IMR-90 (cell line): ENCODE measurements at regions of chr2 and their contacts with region 1.

Region 1: GRCh38 chr2:54704688-54705605 is 18.5 kb upstream of the EML6 start:
- DNase-seq: peak; percentile 77
- ATAC-seq: peak; percentile 87
- H3K4me3 ChIP-seq: no peak overlapping the region
- H3K27ac ChIP-seq: no peak overlapping the region
- H3K4me1 ChIP-seq: no peaks in the 10 kb centered on the region; the same call in 1 of the 2 replicates
- H3K27me3 ChIP-seq: peaks cover 15% of the 10 kb centered on the region
- CTCF ChIP-seq: peak; percentile 81
- POLR2A ChIP-seq: no peak
- RAD21 ChIP-seq: peak; percentile 85

Region 2: DNA sequence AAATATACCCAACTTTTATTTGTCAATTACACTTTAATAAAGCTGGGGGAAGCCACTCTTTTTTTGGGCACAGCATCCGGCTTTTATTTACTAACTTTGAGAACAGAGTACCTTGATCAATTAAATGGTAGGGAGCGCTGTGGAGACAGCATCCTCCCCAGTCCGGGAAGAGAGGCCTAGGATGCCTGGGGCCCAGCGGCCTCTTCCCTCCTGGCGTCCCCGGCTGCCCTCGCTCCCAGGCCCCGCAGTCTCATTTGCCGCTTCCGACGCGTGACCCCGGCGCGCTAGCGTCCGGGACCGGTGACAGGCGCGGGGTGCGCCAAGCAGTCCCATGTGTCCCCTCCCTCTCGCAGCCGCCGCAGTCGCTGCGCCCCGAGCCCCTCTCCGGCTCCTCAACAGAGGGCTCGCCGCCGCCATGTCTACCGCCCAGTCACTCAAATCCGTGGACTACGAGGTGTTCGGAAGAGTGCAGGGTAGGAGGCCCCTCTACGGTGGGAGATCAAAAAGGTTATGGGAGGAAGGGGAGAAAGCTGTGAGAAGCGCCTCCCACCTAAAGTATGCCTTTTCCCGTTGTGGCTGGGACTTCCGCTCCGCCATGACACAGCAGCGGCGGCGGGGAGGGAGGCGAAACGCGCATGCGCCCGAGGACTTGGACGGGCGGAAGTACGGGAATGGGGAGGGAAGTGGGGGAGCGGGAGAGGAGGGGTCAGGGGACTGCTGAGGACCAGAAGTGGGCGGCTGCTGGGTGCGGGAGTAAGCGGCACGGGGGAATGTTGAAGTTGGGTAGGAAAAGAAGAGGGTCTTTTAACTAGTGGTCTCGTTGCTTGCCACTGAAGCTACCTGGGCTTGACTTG is 589.4 kb before region 1 on chr2 and contains the start of gene ACYP2:
- CTCF ChIA-PET with region 1: no interaction called
- POLR2A ChIA-PET with region 1: no interaction called
- dilution Hi-C with region 1: no loop called
- in situ Hi-C with region 1: loop called (anchors 10 kb)
- intact Hi-C with region 1: loop called (anchors 2 kb)
- DNase-seq: peak; percentile 96
- ATAC-seq: peak; percentile 97
- H3K4me3 ChIP-seq: peak within 1 kb of the TSS; percentile 77
- H3K27ac ChIP-seq: peak within 1 kb of the TSS; percentile 99
- H3K4me1 ChIP-seq: no peaks in the 10 kb centered on the region
- H3K27me3 ChIP-seq: no peaks in the 10 kb centered on the region
- CTCF ChIP-seq: peak; percentile 47
- POLR2A ChIP-seq: peak; percentile 93
- RAD21 ChIP-seq: peak; percentile 51
- total RNA-seq, gene ACYP2: 3.9 and 5.8 TPM in 2 replicates

Region 3: DNA sequence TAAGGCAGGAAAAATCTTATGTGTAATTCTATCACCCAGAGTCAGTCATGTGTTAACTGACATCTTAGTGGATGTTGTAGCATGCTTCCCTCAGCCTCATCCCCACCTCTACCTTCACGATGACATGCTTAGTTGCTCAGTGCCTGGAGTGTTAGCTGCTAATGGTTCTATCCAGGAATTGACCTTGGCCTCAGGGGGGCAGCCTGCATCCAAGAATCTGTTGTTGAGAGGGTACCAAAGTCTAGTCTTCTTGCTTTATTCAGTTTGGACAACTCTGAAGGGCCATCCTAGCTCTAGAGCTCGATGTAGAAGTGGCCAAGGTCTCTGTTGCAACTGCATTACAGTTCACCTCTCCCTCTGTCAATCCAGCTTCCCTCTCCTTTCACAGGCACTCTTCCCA is 528.4 kb before region 1 on chr2:
- CTCF ChIA-PET with region 1: interaction called, 3 read pairs
- POLR2A ChIA-PET with region 1: no interaction called
- dilution Hi-C with region 1: no loop called
- in situ Hi-C with region 1: no loop called
- intact Hi-C with region 1: loop called (anchors 1 kb)
- DNase-seq: peak; percentile 46
- ATAC-seq: peak; percentile 85
- H3K4me3 ChIP-seq: no peak overlapping the region
- H3K27ac ChIP-seq: no peak overlapping the region
- H3K4me1 ChIP-seq: no peaks in the 10 kb centered on the region
- H3K27me3 ChIP-seq: no peaks in the 10 kb centered on the region
- CTCF ChIP-seq: peak; percentile 61
- POLR2A ChIP-seq: no peak
- RAD21 ChIP-seq: peak; percentile 79

Region 4: GRCh38 chr2:54522624-54523281 is 182.2 kb before region 1 on chr2:
- CTCF ChIA-PET with region 1: interaction called, 6 read pairs
- POLR2A ChIA-PET with region 1: interaction called, 3 read pairs
- dilution Hi-C with region 1: no loop called
- in situ Hi-C with region 1: loop called (anchors 10 kb)
- intact Hi-C with region 1: loop called (anchors 1 kb)
- DNase-seq: peak; percentile 59
- ATAC-seq: no peak
- H3K4me3 ChIP-seq: no peak overlapping the region
- H3K27ac ChIP-seq: no peak overlapping the region
- H3K4me1 ChIP-seq: peaks cover 12% of the 10 kb centered on the region
- H3K27me3 ChIP-seq: no peaks in the 10 kb centered on the region
- CTCF ChIP-seq: peak; percentile 61
- POLR2A ChIP-seq: no peak
- RAD21 ChIP-seq: peak; percentile 75

Region 5: GRCh38 chr2:55080204-55080738 is 375.3 kb after region 1 on chr2:
- CTCF ChIA-PET with region 1: no interaction called
- POLR2A ChIA-PET with region 1: no interaction called
- dilution Hi-C with region 1: no loop called
- in situ Hi-C with region 1: no loop called
- intact Hi-C with region 1: no loop called
- DNase-seq: no peak
- ATAC-seq: no peak
- H3K4me3 ChIP-seq: no peak overlapping the region
- H3K27ac ChIP-seq: no peak overlapping the region
- H3K4me1 ChIP-seq: no peaks in the 10 kb centered on the region
- H3K27me3 ChIP-seq: no peaks in the 10 kb centered on the region
- CTCF ChIP-seq: no peak
- POLR2A ChIP-seq: no peak
- RAD21 ChIP-seq: no peak

Region 6: GRCh38 chr2:55761526-55761925 is 1056.6 kb after region 1 on chr2:
- CTCF ChIA-PET with region 1: no interaction called
- POLR2A ChIA-PET with region 1: no interaction called
- dilution Hi-C with region 1: no loop called
- in situ Hi-C with region 1: no loop called
- intact Hi-C with region 1: no loop called
- DNase-seq: peak; percentile 23
- ATAC-seq: peak; percentile 62
- H3K4me3 ChIP-seq: no peak overlapping the region
- H3K27ac ChIP-seq: no peak overlapping the region; the same call in 1 of the 2 replicates
- H3K4me1 ChIP-seq: peaks cover 2% of the 10 kb centered on the region; the same call in 1 of the 2 replicates
- H3K27me3 ChIP-seq: no peaks in the 10 kb centered on the region
- CTCF ChIP-seq: no peak
- POLR2A ChIP-seq: no peak
- RAD21 ChIP-seq: no peak